Right ventricle myocardium superior (tissue), 1 donor: ENCODE measurements at regions of chr16 and their contacts with region 1.

Region 1: GRCh38 chr16:55701442-55702319 is 45.9 kb downstream of the SLC6A2 start:
- DNase-seq: peak; percentile 71
- ATAC-seq: peak; percentile 73

Region 2: GRCh38 chr16:55465077-55465896 is 236.4 kb before region 1 on chr16:
- intact Hi-C with region 1: loop called (anchors 2 kb)
- DNase-seq: peak; percentile 94
- ATAC-seq: peak; percentile 97